Activated CD4-positive, alpha-beta T cell treated with anti-CD3 and anti-CD28 coated beads, Interleukin-2, amount 10 ng/mL, durations not matched to agents 24 days and 14 days (primary cell): ENCODE measurements at regions of chr3 and their contacts with region 1.

Region 1: GRCh38 chr3:71652781-71653413 is 69.4 kb upstream of the FOXP1 start:
- DNase-seq: peak; percentile 59
- H3K4me3 Mint-ChIP-seq: no peak overlapping the region
- H3K27ac Mint-ChIP-seq: no peak overlapping the region
- H3K4me1 Mint-ChIP-seq: peaks cover 3% of the 10 kb centered on the region
- H3K27me3 Mint-ChIP-seq: no peaks in the 10 kb centered on the region

Region 2: GRCh38 chr3:70064194-70064779 is 1588.6 kb before region 1 on chr3:
- intact Hi-C with region 1: loop called (anchors 2 kb)
- DNase-seq: no peak
- H3K4me3 Mint-ChIP-seq: no peak overlapping the region
- H3K27ac Mint-ChIP-seq: no peak overlapping the region
- H3K4me1 Mint-ChIP-seq: no peaks in the 10 kb centered on the region
- H3K27me3 Mint-ChIP-seq: peaks cover 3% of the 10 kb centered on the region

Region 3: DNA sequence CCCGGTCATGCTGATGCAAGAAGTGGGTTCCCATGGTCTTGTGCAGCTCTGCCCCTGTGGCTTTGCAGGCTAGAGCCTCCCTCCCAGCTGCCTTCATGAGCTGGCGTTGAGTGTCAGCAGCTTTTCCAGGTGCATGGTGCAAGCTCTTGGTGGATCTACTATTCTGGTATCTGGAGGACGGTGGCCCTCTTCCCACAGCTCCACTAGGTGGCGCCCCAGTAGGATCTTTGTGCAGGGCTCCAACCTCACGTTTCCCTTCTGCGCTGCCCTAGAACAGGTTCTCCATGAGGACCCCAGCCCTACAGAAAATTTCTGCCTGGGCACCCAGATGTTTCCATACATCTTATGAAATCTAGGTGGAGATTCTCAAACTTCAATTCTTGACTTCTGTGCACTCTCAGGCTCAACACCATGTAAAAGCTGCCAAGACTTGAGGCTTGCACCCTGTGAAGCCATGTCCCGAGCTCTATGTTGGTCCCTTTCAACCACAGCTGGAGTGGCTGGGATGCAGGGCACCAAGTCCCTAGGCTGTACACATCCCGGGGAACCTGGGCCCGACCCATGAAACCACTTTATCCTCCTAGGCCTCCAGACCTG is 1102.1 kb before region 1 on chr3:
- intact Hi-C with region 1: loop called (anchors 2 kb)
- DNase-seq: peak; percentile 90
- H3K4me3 Mint-ChIP-seq: no peak overlapping the region
- H3K27ac Mint-ChIP-seq: no peak overlapping the region
- H3K4me1 Mint-ChIP-seq: no peaks in the 10 kb centered on the region
- H3K27me3 Mint-ChIP-seq: peaks cover 12% of the 10 kb centered on the region

Region 4: DNA sequence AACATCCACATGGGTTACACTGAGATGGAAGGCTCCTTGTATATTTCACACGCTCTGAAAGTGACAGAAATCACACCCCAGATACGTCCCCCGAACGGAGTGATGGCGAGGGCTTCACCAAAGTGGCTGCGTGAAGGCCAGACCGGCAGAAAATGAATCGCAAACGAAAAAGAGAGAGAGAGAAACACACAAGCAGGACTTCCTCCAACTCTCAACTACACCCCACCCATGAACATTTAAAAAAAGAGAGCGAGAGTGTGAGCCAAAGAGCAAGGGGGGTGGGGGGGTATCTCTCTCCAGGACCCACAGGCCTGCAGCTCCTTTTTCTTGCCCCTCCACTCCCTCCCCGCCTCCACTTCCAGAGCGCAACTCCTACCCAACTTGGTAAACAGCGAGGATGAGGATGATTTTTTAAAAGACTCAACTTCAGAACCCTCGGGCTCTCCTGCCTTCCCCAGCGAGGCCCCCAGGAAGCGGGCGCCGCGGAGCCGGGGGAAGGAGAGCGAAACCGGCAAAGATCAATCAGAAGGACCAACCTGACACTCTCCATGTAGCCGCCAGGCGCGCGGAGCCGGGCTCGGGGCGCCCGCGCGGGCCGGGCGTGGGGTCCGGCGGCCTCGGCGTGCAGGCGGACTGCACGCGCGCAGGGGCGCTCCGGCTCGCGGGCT is 588.5 kb before region 1 on chr3:
- intact Hi-C with region 1: loop called (anchors 10 kb)
- DNase-seq: peak; percentile 92
- H3K4me3 Mint-ChIP-seq: no peak overlapping the region
- H3K27ac Mint-ChIP-seq: no peak overlapping the region
- H3K4me1 Mint-ChIP-seq: peaks cover 55% of the 10 kb centered on the region
- H3K27me3 Mint-ChIP-seq: no peaks in the 10 kb centered on the region

Region 5: DNA sequence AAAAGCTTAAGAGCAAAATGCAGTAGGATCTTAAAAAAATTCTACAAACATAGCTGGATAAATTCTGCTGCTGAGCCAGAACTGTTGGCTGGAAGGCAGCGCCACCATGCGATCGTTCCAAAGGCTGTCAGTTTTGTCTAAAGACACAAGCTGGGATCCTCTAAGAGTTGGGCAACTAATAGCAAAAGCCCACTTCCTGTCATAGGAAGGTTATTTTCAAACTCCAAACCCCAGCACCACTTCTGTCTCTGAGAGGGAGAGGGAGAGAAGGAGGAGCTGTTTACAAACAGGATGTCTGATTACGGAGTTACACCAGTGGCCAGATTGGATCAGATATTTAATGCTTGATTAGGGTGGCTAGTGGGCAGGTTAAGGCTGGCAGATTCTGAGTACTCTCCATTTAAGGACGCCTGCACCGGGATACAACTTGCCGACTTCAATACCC is 28.3 kb after region 1 on chr3:
- intact Hi-C with region 1: no loop called
- DNase-seq: peak; percentile 76
- H3K4me3 Mint-ChIP-seq: no peak overlapping the region
- H3K27ac Mint-ChIP-seq: no peak overlapping the region
- H3K4me1 Mint-ChIP-seq: peaks cover 7% of the 10 kb centered on the region
- H3K27me3 Mint-ChIP-seq: no peaks in the 10 kb centered on the region